Activated naive CD4-positive, alpha-beta T cell treated with anti-CD3 and anti-CD28 coated beads, Interleukin-2, amount 10 ng/mL, durations not matched to agents 7 days and 5 days (primary cell): ENCODE measurements at regions of chr4 and their contacts with region 1.

Region 1: DNA sequence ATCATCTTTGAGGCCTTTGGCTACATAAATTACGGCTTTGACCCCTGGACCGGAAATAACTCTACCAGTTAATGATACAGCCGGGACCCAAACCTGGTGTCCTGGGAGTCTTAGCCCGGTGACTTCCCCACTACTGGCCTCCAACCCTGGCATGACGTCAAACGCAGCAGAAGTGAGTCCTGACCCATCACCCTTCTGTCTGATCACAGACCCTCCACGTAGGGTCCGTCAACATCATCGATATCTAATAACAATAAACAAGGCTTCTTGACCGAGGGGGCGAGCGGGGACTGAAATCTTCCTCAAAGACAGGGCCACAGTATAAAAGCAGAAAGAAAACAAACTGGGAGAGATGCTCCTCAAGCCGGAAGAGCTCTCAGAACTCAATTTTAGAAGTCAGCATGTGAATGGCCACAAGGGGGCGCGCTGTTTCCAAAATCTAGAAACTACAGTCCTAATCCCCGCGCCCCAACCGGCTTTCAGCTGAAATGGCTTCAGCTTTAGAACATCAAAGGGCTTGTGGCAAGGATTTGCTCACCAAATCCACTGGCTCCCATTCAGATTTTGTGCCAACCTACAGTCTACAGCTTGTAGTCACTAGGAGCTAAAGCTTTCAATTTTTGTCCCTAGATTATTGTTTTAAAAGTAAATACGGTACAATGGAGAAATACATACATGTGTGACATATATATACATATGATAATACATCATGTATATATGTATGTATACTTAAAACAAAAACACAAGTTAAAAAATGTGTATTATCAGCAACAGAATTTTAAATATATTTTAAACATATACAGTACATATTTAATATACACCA is 46.4 kb upstream of the ENPP6 start:
- DNase-seq: peak; percentile 97
- H3K4me3 Mint-ChIP-seq: no peak overlapping the region
- H3K27ac Mint-ChIP-seq: peak overlapping the region; percentile 62
- H3K4me1 Mint-ChIP-seq: peaks cover 45% of the 10 kb centered on the region
- H3K27me3 Mint-ChIP-seq: peaks cover 19% of the 10 kb centered on the region

Region 2: DNA sequence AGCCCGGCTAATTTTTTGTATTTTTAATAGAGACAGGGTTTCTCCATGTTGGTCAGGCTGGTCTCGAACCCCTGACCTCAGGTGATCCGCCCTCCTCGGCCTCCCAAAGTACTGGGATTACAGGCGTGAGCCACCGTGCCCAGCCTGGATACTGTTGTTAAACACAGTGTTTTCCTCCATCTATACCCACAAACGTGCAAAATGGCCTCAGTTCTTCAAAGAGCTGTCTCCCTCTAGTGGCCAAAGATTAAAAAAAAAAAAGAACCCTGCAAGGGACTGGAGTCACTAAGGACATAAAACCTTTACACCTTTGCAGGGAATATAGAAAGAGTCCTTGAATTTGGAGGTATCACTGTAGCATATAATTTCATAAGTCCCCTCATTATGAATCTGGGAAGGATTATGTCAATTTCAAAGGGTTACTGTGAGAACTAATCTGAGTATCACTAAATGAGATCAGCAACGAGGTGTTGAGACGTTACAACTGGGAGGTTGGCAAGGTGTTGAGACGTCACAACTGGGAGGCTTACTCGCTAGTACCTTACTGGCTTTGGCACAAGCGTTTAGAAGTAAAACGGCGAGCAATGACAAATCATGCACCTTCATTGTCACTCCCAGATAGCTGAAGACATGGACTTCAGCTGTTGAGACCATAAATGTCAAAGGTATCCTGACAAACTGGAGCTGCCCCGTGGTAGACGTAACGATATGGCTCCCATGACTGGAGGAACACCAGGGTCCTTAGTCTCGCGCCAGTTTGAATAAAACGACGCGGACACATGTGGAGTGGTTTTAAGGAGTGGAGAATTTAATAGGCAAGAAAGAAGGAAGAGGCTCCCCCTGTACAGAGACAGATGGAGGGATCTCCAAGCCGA is 13.1 kb before region 1 on chr4:
- CTCF ChIA-PET with region 1: interaction called, 35 read pairs
- DNase-seq: peak; percentile 34
- H3K4me3 Mint-ChIP-seq: no peak overlapping the region
- H3K27ac Mint-ChIP-seq: no peak overlapping the region
- H3K4me1 Mint-ChIP-seq: peaks cover 8% of the 10 kb centered on the region
- H3K27me3 Mint-ChIP-seq: no peaks in the 10 kb centered on the region

Region 3: GRCh38 chr4:184287697-184288255 is 23.7 kb after region 1 on chr4:
- CTCF ChIA-PET with region 1: interaction called, 115 read pairs
- DNase-seq: no peak
- H3K4me3 Mint-ChIP-seq: no peak overlapping the region
- H3K27ac Mint-ChIP-seq: no peak overlapping the region
- H3K4me1 Mint-ChIP-seq: peaks cover 38% of the 10 kb centered on the region
- H3K27me3 Mint-ChIP-seq: no peaks in the 10 kb centered on the region

Region 4: GRCh38 chr4:184416913-184417734 is 153.0 kb after region 1 on chr4:
- CTCF ChIA-PET with region 1: interaction called, 13 read pairs
- DNase-seq: peak; percentile 77
- H3K4me3 Mint-ChIP-seq: peak overlapping the region; percentile 74
- H3K27ac Mint-ChIP-seq: peak overlapping the region; percentile 97
- H3K4me1 Mint-ChIP-seq: peaks cover 94% of the 10 kb centered on the region
- H3K27me3 Mint-ChIP-seq: no peaks in the 10 kb centered on the region

Region 5: GRCh38 chr4:184514121-184514988 is 250.2 kb after region 1 on chr4:
- CTCF ChIA-PET with region 1: interaction called, 12 read pairs
- DNase-seq: peak; percentile 43
- H3K4me3 Mint-ChIP-seq: no peak overlapping the region
- H3K27ac Mint-ChIP-seq: no peak overlapping the region
- H3K4me1 Mint-ChIP-seq: peaks cover 27% of the 10 kb centered on the region
- H3K27me3 Mint-ChIP-seq: no peaks in the 10 kb centered on the region

Region 6: DNA sequence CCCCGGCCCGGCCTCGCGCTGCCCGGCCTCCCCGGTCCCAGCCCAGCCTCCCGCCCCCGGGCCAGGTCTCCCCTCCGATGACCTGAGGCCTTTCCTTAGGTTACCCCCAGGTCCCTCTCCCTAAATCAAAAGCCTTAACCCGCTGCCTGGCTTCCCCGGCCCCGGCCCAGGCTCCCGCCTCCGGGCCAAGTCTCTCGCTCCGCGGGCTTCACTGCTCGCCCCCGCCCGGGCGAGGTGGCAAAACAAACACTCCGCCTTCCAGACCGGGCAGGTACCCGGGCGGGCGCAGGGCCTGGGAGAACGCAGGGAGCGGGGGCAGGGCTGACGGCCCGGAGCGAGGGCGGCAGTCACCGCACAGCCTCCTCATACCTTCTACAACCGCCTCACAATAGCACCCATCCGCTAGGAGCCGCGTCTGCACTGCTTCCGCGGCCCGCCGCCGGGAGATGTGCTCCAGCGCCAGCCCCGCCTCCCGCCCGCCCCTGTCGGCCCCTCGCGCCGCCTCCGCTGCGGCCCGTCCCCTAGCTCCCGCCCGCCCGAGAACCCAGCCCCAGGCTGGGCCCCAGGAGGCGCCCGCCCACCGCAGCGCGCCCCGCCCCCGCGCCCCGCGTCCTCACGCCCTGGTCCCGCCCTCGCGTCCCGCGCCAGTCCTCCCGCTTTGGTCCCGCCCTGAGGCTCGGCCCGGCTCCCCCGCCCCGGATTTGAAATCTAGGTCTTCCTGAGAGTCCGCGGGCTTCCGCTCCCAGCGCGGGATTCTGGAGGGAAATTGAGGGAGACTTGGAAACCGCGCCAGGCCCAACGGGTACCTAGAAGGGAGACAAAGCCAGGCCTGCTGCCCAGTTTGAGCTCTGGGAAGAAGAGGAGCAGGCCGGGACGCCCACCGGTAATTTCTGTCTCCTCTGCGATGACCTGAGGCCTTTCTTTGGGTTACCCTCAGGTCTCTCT is 385.2 kb after region 1 on chr4 and contains the starts of genes CASP3 and PRIMPOL:
- CTCF ChIA-PET with region 1: interaction called, 11 read pairs
- DNase-seq: peak; percentile 97
- H3K4me3 Mint-ChIP-seq: peak within 1 kb of the TSS; percentile 98
- H3K27ac Mint-ChIP-seq: peak within 1 kb of the TSS; percentile 96
- H3K4me1 Mint-ChIP-seq: peaks cover 63% of the 10 kb centered on the region
- H3K27me3 Mint-ChIP-seq: no peaks in the 10 kb centered on the region